ENCODE measurements at regions of chr6 and their contacts with region 1.

Region 1: DNA sequence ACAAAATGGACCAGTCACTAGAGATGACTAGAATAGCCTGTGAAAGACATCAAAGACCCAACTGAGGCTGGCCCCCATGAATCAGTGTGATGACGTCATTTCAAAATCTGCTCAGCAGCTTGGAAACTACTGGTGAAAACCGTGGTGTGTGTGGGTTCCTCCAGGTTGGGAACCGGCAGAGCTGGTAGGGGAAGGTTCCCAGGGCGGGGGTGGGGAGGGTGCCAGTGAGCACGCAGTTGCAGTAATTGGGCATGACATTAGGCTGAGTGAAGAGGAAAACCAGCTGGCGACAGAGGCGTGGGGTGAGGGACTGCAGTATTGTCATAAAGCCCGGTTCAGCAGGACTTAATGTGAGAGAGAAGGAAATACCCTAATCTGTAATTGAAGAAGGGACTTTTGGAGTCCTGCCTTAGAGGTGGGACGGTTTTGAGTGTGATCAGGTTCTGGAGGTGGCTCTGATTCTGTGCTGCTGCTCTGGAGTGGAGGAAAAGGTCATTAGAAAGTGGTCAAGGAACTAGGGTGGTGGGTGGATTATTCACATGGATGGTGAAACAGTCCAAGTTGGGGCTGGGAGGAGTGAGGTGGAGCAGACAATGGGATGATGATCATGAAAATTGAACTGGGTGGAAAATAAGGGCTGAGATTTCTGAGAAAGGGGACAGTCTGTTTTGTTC is 52.0 kb upstream of the MTHFD1L start:
- DNase-seq: peak; percentile 9
- H3K4me3 Mint-ChIP-seq: peak overlapping the region; percentile 45
- H3K27ac Mint-ChIP-seq: peak overlapping the region; percentile 66
- H3K4me1 Mint-ChIP-seq: peaks cover 28% of the 10 kb centered on the region
- H3K27me3 Mint-ChIP-seq: no peaks in the 10 kb centered on the region
- CTCF ChIP-seq: no peak

Region 2: GRCh38 chr6:150079604-150080003 is 733.9 kb before region 1 on chr6:
- CTCF ChIA-PET with region 1: interaction called, 4 read pairs
- intact Hi-C with region 1: loop called (anchors 5 kb)
- DNase-seq: no peak
- H3K4me3 Mint-ChIP-seq: no peak overlapping the region
- H3K27ac Mint-ChIP-seq: no peak overlapping the region
- H3K4me1 Mint-ChIP-seq: no peaks in the 10 kb centered on the region
- H3K27me3 Mint-ChIP-seq: peaks cover 16% of the 10 kb centered on the region
- CTCF ChIP-seq: no peak

Region 3: DNA sequence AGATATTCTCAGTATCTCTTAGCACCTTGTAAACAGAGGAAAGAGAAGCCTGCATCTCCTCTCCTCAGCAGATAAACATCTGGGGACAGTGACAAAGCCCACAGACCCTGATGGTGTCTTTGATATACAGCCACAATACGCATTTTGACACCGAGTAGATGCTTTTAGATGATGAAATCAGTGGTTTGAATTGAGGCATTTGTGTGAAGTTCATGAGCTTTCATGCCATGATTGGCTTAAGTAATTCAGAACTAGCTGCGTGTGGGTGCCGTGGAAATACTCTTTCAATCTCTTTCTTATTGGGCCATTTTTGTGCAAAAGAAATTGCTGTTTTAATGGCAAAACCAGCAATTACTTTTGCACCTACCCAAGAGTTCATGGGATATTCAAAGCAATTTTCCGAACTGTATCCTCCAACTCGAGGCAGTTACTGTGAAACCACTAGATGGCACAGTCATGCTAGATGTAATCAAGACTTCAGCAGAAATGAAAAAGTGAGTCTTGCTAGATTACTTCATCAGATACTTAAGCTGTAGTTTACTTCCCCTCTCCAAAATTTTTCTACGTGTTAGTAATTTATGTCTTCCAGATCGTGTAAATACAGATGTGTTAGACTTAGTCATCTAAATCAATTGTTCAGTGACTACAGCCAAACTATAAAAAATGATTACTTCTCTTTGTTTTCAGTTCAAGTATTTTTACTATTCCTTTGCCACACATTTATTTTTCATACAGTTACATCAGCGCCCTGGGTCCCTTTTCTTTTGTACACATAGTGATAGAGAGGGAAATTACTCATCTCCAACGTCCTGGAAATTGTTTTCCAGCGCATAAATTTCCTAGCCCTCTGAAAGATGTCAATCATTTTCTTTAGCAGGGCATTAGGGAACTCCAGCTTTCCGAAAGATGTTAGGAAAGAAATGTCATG is 395.3 kb before region 1 on chr6:
- CTCF ChIA-PET with region 1: interaction called, 34 read pairs
- intact Hi-C with region 1: loop called (anchors 1 kb)
- DNase-seq: peak; percentile 15
- H3K4me3 Mint-ChIP-seq: peak overlapping the region; percentile 57
- H3K27ac Mint-ChIP-seq: peak overlapping the region; percentile 89
- H3K4me1 Mint-ChIP-seq: peaks cover 24% of the 10 kb centered on the region
- H3K27me3 Mint-ChIP-seq: no peaks in the 10 kb centered on the region
- CTCF ChIP-seq: peak; percentile 42

Region 4: DNA sequence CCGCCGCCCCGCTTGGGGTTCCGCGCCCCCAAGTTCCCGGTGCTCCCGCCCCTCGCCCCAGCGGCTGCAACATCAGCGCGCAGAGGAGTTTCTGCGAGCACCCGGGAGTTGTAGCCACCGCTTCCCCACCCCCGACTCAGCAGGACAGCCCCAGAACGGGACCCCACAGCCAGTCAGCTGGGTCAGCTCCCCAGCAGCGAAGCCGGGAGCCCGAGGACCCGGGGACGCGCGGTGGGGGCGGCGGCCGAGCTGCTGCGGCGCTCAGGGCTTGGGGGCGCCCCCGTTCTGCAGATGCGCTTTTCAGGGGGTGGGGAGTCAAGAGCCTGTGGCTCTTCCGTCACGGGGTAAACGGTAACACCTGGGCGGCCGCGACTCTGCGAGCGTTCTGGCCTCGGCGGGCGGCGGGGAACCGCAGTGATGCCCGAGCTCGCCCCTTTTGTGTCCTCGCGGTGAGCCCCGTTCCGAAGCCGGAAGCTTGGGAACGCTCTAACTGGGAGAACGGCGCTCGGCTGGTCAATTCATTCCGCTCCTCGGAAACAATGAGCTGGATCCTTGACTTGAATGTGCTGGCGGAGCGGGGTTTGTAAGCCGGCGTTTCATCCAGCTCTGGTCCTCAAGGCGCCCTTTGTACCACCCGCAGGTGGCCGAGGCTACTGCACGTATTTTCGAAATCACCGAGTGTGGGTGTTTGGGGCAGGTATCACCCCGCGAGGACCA is 213.0 kb before region 1 on chr6:
- CTCF ChIA-PET with region 1: interaction called, 6 read pairs
- intact Hi-C with region 1: loop called (anchors 5 kb)
- DNase-seq: peak; percentile 77
- H3K4me3 Mint-ChIP-seq: peak overlapping the region; percentile 82
- H3K27ac Mint-ChIP-seq: peak overlapping the region; percentile 77
- H3K4me1 Mint-ChIP-seq: no peaks in the 10 kb centered on the region
- H3K27me3 Mint-ChIP-seq: no peaks in the 10 kb centered on the region
- CTCF ChIP-seq: peak; percentile 23

Region 5: DNA sequence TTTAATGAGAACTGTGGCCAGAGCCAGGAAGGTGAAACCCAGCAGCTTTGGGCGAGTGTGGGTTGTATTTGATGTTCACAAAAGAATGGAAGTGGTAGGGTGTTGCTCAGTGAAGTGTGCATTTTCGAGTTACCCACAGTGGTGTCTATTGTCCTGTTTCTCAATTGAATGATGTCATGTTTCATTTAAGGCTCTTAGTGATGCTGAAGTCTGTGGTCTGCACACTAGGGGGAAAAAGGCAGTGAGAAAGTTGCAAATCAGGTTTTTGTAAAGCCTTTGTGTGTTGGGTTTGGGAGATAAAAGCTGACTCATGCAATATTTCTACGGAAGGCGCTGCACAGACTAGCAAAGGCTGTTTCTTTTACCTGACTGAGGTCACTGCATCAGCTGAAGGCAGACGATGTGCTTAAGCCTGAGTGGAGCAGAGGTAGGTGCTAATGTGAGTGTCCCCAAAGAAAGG is 92.7 kb before region 1 on chr6:
- CTCF ChIA-PET with region 1: interaction called, 4 read pairs
- intact Hi-C with region 1: loop called (anchors 5 kb)
- DNase-seq: peak; percentile 47
- H3K4me3 Mint-ChIP-seq: peak overlapping the region; percentile 42
- H3K27ac Mint-ChIP-seq: peak overlapping the region; percentile 75
- H3K4me1 Mint-ChIP-seq: peaks cover 23% of the 10 kb centered on the region
- H3K27me3 Mint-ChIP-seq: no peaks in the 10 kb centered on the region
- CTCF ChIP-seq: no peak

Measured in Calu3 (cell line).